ENCODE measurements at regions of chr2 and their contacts with region 1.

Region 1: GRCh38 chr2:85288244-85288725 is 39.5 kb downstream of the TGOLN2 start:
- DNase-seq: peak; percentile 79
- H3K4me3 Mint-ChIP-seq: peak overlapping the region; percentile 56
- H3K27ac Mint-ChIP-seq: peak overlapping the region; percentile 92
- H3K4me1 Mint-ChIP-seq: peaks cover 31% of the 10 kb centered on the region
- H3K27me3 Mint-ChIP-seq: no peaks in the 10 kb centered on the region
- CTCF ChIP-seq: no peak

Region 2: GRCh38 chr2:84495539-84496146 is 792.6 kb before region 1 on chr2:
- CTCF ChIA-PET with region 1: no interaction called
- POLR2A ChIA-PET with region 1: no interaction called
- intact Hi-C with region 1: loop called (anchors 10 kb)
- DNase-seq: peak; percentile 72
- H3K4me3 Mint-ChIP-seq: no peak overlapping the region
- H3K27ac Mint-ChIP-seq: peak overlapping the region; percentile 35
- H3K4me1 Mint-ChIP-seq: peaks cover 21% of the 10 kb centered on the region
- H3K27me3 Mint-ChIP-seq: no peaks in the 10 kb centered on the region
- CTCF ChIP-seq: peak; percentile 53

Region 3: GRCh38 chr2:85053802-85054201 is 234.5 kb before region 1 on chr2:
- CTCF ChIA-PET with region 1: interaction called, 19 read pairs
- POLR2A ChIA-PET with region 1: interaction called, 12 read pairs
- intact Hi-C with region 1: no loop called
- DNase-seq: peak; percentile 66
- H3K4me3 Mint-ChIP-seq: peak overlapping the region; percentile 6
- H3K27ac Mint-ChIP-seq: peak overlapping the region; percentile 68
- H3K4me1 Mint-ChIP-seq: peaks cover 25% of the 10 kb centered on the region
- H3K27me3 Mint-ChIP-seq: no peaks in the 10 kb centered on the region
- CTCF ChIP-seq: no peak

Region 4: GRCh38 chr2:85132834-85133637 is 155.2 kb before region 1 on chr2 and contains the start of gene TCF7L1:
- CTCF ChIA-PET with region 1: interaction called, 5 read pairs
- POLR2A ChIA-PET with region 1: interaction called, 3 read pairs
- intact Hi-C with region 1: loop called (anchors 1 kb)
- DNase-seq: peak; percentile 58
- H3K4me3 Mint-ChIP-seq: peak within 1 kb of the TSS; percentile 80
- H3K27ac Mint-ChIP-seq: no peak within 1 kb of the TSS
- H3K4me1 Mint-ChIP-seq: no peaks in the 10 kb centered on the region
- H3K27me3 Mint-ChIP-seq: no peaks in the 10 kb centered on the region
- CTCF ChIP-seq: peak; percentile 59
- total RNA-seq, gene TCF7L1: 0.81 and 1.1 TPM in 2 replicates

Region 5: DNA sequence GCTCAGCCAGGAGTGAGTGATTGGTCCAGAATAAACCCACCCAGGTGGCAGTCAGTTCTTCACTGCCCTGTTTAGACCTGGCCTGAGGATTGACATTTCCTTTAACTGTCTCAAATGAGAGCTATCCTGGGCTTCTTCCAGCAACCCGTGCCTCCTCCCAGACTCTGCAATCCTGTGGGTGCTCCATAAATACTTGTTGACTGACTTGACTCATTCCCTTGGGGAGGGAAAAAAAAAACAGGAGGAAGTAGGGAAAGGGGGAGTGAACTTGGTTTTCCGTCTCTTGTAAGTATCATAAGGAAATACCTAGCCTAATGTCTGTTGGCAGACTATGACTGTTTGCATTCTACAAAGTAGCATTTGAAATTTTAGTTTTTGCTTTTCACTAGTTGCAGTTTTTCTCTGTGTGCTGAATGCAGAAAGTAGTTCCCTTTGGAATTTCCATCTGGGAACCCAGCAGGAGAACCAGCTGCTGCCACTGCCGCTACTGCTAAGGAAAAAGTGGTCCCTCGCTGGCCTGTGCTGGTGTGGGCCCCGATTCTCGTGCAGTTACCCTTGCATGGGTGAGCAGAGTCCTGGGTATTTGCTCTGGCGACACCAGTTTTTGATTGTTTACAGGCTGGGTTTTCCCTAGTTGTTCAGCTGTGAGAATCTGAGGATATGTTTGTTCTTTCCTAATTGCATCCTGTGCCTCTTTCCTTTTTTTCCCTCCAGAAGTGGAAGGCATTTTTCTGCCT is 39.3 kb before region 1 on chr2:
- CTCF ChIA-PET with region 1: interaction called, 10 read pairs
- POLR2A ChIA-PET with region 1: no interaction called
- intact Hi-C with region 1: no loop called
- DNase-seq: peak; percentile 76
- H3K4me3 Mint-ChIP-seq: no peak overlapping the region
- H3K27ac Mint-ChIP-seq: no peak overlapping the region
- H3K4me1 Mint-ChIP-seq: peaks cover 8% of the 10 kb centered on the region
- H3K27me3 Mint-ChIP-seq: no peaks in the 10 kb centered on the region
- CTCF ChIP-seq: no peak

Region 6: GRCh38 chr2:85266146-85267041 is 21.9 kb before region 1 on chr2:
- CTCF ChIA-PET with region 1: interaction called, 175 read pairs
- POLR2A ChIA-PET with region 1: interaction called, 3 read pairs
- intact Hi-C with region 1: loop called (anchors 1 kb)
- DNase-seq: peak; percentile 74
- H3K4me3 Mint-ChIP-seq: no peak overlapping the region
- H3K27ac Mint-ChIP-seq: no peak overlapping the region
- H3K4me1 Mint-ChIP-seq: no peaks in the 10 kb centered on the region
- H3K27me3 Mint-ChIP-seq: no peaks in the 10 kb centered on the region
- CTCF ChIP-seq: peak; percentile 92

Region 7: DNA sequence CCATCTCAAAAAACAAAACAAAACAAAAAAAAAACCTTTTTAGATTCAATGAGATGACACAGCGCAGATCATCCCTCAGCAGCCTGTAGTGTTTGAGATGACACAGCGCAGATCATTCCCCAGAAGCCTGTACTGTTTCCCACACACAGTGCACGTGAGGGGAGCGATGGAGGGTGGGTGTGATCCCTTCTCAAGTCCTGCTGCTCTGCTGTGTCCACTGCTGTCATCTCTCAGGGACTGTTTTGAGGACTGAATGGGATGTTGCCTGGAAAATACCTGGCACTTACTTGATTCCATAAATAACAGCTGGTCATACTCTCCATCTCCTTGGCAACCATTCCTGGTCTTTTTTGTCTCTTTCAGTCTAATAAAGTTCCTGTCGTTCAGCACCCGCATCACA is 13.8 kb after region 1 on chr2:
- CTCF ChIA-PET with region 1: interaction called, 163 read pairs
- POLR2A ChIA-PET with region 1: interaction called, 12 read pairs
- intact Hi-C with region 1: loop called (anchors 1 kb)
- DNase-seq: no peak
- H3K4me3 Mint-ChIP-seq: no peak overlapping the region
- H3K27ac Mint-ChIP-seq: no peak overlapping the region
- H3K4me1 Mint-ChIP-seq: no peaks in the 10 kb centered on the region
- H3K27me3 Mint-ChIP-seq: no peaks in the 10 kb centered on the region
- CTCF ChIP-seq: no peak

Region 8: DNA sequence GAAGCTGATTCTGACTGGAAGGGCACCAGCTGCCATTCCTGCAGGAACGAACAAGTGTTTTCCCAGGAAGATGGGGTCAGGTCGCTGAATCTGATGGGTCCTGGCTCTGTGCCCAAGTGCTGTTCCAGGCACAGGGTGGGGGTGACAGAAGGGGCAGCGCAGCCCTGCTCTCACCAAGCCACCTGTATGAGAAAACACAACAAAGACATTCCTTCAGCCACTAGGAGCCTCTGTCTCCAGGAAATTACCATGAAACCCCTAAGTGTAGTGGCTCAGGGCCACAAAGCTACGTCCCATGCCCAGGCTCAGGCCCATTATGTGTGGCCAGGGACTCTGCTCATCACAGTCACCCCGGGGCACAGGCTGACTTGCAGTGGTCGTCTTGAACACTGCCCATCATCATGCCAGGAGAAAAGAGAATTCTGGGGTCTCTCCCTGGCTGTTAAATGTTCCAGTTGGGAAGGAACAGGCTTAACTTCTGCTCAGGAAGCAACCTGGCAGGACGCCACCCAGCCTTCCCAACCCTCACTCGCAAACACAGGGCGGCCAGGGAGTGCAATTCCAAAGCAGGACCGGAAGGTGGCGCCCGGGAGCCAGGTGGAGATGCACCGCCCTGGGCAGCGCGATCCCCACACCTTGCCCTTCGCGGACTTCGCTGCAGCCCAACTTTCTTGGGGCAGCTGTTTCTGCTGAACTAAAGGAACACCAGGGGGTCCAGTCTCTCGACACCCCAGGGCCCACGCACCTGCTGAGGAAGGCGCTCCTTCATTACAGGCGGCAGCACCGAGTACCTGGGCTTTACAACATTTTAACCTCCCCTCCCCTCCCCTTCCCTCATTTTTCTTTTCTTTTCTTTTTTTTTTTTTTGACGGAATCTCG is 390.7 kb after region 1 on chr2:
- CTCF ChIA-PET with region 1: no interaction called
- POLR2A ChIA-PET with region 1: no interaction called
- intact Hi-C with region 1: no loop called
- DNase-seq: peak; percentile 91
- H3K4me3 Mint-ChIP-seq: no peak overlapping the region
- H3K27ac Mint-ChIP-seq: no peak overlapping the region
- H3K4me1 Mint-ChIP-seq: peaks cover 32% of the 10 kb centered on the region
- H3K27me3 Mint-ChIP-seq: no peaks in the 10 kb centered on the region
- CTCF ChIP-seq: peak; percentile 99